CD8-positive, alpha-beta T cell (primary cell): ENCODE measurements at regions of chr19 and their contacts with region 1.

Region 1: DNA sequence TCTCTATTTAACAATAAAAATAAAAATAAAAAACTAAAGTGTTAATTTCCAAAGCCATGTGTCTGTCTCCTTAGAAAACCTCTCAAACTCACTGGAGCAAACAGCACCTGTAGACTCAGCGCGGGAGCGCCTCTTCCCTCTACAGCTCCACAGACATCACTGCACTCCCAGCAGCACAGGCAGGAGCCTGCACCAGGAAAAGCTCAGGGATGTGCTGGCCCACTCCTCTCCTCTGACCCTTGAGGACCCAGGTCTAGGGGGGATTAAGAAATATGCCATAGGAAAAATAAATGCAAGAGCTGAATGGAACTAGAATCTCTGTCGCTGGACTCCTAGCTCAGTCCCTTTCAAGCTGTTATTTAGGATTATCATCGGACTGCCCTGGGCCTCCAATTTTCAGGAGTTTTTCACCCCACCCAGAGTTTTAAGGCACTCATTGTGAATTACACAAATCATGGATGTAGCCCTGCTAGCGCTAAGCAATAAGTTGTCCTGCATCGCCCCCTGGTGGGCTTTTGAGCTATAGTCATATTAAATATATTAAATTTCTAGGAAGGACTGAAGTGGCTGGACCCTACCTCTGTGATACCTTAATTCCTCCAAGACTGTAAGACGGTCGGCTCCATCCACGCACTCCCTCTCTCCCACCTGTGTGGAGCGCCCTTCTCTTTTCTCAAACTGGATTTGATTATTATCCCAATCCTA is 333.9 kb downstream of the UQCRFS1 start:
- DNase-seq: peak; percentile 8 to 68 (median 55)
- ATAC-seq: no peak
- H3K4me3 ChIP-seq: no peak overlapping the region
- H3K4me3 Mint-ChIP-seq: no peak overlapping the region
- H3K27ac ChIP-seq: no peak overlapping the region
- H3K27ac Mint-ChIP-seq: no peak overlapping the region
- H3K4me1 ChIP-seq: no peaks in the 10 kb centered on the region
- H3K4me1 Mint-ChIP-seq: no peaks in the 10 kb centered on the region
- H3K27me3 ChIP-seq: no peaks in the 10 kb centered on the region
- H3K27me3 Mint-ChIP-seq: peaks cover 3% of the 10 kb centered on the region
- CTCF ChIP-seq: peak; percentile 66

Region 2: GRCh38 chr19:28466107-28467045 is 412.6 kb before region 1 on chr19:
- CTCF ChIA-PET with region 1: interaction called, 7 read pairs
- POLR2A ChIA-PET with region 1: no interaction called
- intact Hi-C with region 1: loop called in 1 of 2 experiments (anchors 1 kb)
- DNase-seq: peak; percentile 16 to 79 (median 70)
- ATAC-seq: peak; percentile 36
- H3K4me3 ChIP-seq: no peak overlapping the region
- H3K4me3 Mint-ChIP-seq: no peak overlapping the region
- H3K27ac ChIP-seq: no peak overlapping the region
- H3K27ac Mint-ChIP-seq: no peak overlapping the region
- H3K4me1 ChIP-seq: peaks cover 15% of the 10 kb centered on the region
- H3K4me1 Mint-ChIP-seq: peaks cover 38% of the 10 kb centered on the region
- H3K27me3 ChIP-seq: no peaks in the 10 kb centered on the region
- H3K27me3 Mint-ChIP-seq: peaks cover 2% of the 10 kb centered on the region
- CTCF ChIP-seq: peak; percentile 71

Region 3: GRCh38 chr19:28737021-28737895 is 141.8 kb before region 1 on chr19:
- CTCF ChIA-PET with region 1: no interaction called
- POLR2A ChIA-PET with region 1: no interaction called
- intact Hi-C with region 1: loop called in 1 of 2 experiments (anchors 2 kb)
- DNase-seq: peak in 2 of 9 experiments; percentile 38 to 51
- ATAC-seq: no peak
- H3K4me3 ChIP-seq: no peak overlapping the region
- H3K4me3 Mint-ChIP-seq: no peak overlapping the region
- H3K27ac ChIP-seq: peak overlapping the region in 1 of 2 experiments; percentile 60
- H3K27ac Mint-ChIP-seq: no peak overlapping the region
- H3K4me1 ChIP-seq: no peaks in the 10 kb centered on the region
- H3K4me1 Mint-ChIP-seq: peaks cover 4% of the 10 kb centered on the region
- H3K27me3 ChIP-seq: no peaks in the 10 kb centered on the region
- H3K27me3 Mint-ChIP-seq: peaks cover 3% of the 10 kb centered on the region
- CTCF ChIP-seq: peak; percentile 36